MCF 10A (cell line): ENCODE measurements at regions of chr7 and their contacts with region 1.

Region 1: GRCh38 chr7:112495810-112496462 is 15.1 kb downstream of the LSMEM1 start:
- DNase-seq: peak; percentile 77
- H3K4me3 Mint-ChIP-seq: no peak overlapping the region
- H3K27ac Mint-ChIP-seq: no peak overlapping the region
- H3K4me1 Mint-ChIP-seq: peaks cover 8% of the 10 kb centered on the region
- H3K27me3 Mint-ChIP-seq: peaks cover 24% of the 10 kb centered on the region
- CTCF ChIP-seq: peak; percentile 47

Region 2: GRCh38 chr7:111741811-111742240 is 754.1 kb before region 1 on chr7:
- CTCF ChIA-PET with region 1: interaction called, 59 read pairs
- POLR2A ChIA-PET with region 1: interaction called, 3 read pairs
- intact Hi-C with region 1: loop called (anchors 5 kb)
- DNase-seq: peak; percentile 78
- H3K4me3 Mint-ChIP-seq: no peak overlapping the region
- H3K27ac Mint-ChIP-seq: no peak overlapping the region
- H3K4me1 Mint-ChIP-seq: no peaks in the 10 kb centered on the region
- H3K27me3 Mint-ChIP-seq: no peaks in the 10 kb centered on the region
- CTCF ChIP-seq: peak; percentile 64

Region 3: GRCh38 chr7:111763221-111763801 is 732.6 kb before region 1 on chr7:
- CTCF ChIA-PET with region 1: interaction called, 17 read pairs
- POLR2A ChIA-PET with region 1: no interaction called
- intact Hi-C with region 1: loop called (anchors 1 kb)
- DNase-seq: peak; percentile 63
- H3K4me3 Mint-ChIP-seq: no peak overlapping the region
- H3K27ac Mint-ChIP-seq: no peak overlapping the region
- H3K4me1 Mint-ChIP-seq: no peaks in the 10 kb centered on the region
- H3K27me3 Mint-ChIP-seq: no peaks in the 10 kb centered on the region
- CTCF ChIP-seq: peak; percentile 50

Region 4: DNA sequence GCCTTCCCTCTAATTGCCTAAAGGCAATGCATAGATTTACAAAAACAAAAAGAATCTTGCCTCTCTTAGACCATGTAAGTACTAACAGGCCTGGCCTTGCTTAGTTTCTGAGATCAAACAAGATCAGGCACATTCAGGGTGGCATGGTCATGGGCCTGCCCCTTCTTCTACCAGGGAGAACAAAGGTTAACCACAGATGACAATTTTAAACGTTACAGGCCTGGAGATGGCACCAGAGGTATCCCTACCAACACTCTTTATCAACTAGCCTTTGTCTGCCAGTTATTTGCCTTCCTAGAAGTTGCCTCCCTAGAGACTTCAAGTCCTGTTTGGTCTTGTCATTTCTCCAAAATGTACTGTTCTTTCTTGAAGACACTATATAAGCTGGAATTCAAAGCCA is 542.3 kb before region 1 on chr7:
- CTCF ChIA-PET with region 1: interaction called, 5 read pairs
- POLR2A ChIA-PET with region 1: no interaction called
- intact Hi-C with region 1: loop called (anchors 10 kb)
- DNase-seq: peak; percentile 51
- H3K4me3 Mint-ChIP-seq: no peak overlapping the region
- H3K27ac Mint-ChIP-seq: peak overlapping the region; percentile 67
- H3K4me1 Mint-ChIP-seq: peaks cover 18% of the 10 kb centered on the region
- H3K27me3 Mint-ChIP-seq: no peaks in the 10 kb centered on the region
- CTCF ChIP-seq: peak; percentile 24

Region 5: DNA sequence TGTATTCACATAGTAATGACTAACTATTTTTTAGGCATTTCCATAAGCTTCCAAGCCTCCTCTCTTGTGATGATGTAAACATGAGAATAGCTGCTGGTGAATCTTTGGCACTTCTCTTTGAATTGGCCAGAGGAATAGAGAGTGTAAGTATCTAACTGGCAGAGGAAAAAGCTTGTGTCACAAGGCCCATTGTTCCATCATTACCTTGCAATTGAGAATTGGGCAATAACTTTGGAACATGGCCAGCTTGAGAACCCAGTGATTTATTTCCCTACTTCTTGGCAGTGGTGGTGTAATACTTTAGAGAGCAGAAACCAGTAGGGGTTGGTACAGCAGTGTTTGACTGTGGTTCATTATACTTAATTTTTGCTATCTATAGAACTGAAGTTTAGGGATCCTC is 33.7 kb before region 1 on chr7:
- CTCF ChIA-PET with region 1: interaction called, 19 read pairs
- POLR2A ChIA-PET with region 1: no interaction called
- intact Hi-C with region 1: no loop called
- DNase-seq: peak; percentile 98
- H3K4me3 Mint-ChIP-seq: no peak overlapping the region
- H3K27ac Mint-ChIP-seq: peak overlapping the region; percentile 54
- H3K4me1 Mint-ChIP-seq: peaks cover 25% of the 10 kb centered on the region
- H3K27me3 Mint-ChIP-seq: no peaks in the 10 kb centered on the region
- CTCF ChIP-seq: no peak

Region 6: GRCh38 chr7:112481833-112482670 is 13.9 kb before region 1 on chr7:
- CTCF ChIA-PET with region 1: interaction called, 19 read pairs
- POLR2A ChIA-PET with region 1: interaction called, 3 read pairs
- intact Hi-C with region 1: no loop called
- DNase-seq: peak; percentile 93
- H3K4me3 Mint-ChIP-seq: no peak overlapping the region
- H3K27ac Mint-ChIP-seq: no peak overlapping the region
- H3K4me1 Mint-ChIP-seq: peaks cover 19% of the 10 kb centered on the region
- H3K27me3 Mint-ChIP-seq: no peaks in the 10 kb centered on the region
- CTCF ChIP-seq: no peak

Region 7: DNA sequence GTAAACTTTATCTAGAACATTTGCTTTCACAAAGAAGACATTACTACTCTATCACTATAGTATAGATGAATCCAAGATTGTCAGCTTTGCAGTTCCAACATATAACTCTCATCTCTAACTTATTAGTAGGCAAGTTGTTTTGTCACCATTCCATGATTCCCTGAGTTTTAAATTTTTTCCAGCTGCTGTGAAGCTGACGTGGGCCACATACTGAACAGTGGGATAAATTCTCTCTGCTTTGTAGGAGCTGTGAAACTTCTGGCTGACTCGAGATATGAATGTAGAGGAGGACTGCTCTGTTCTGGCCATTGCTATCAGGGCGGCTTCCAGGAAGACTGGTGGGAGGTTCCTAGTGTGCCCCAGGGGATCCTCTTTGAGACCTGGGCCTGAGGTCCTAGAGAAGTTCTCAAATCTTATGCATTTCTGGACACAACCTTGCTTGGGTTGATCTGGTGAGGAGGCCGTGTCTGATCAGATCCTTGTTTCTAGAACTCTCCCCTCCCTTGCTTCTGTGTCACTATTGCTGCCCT is 42.9 kb after region 1 on chr7:
- CTCF ChIA-PET with region 1: no interaction called
- POLR2A ChIA-PET with region 1: no interaction called
- intact Hi-C with region 1: no loop called
- DNase-seq: no peak
- H3K4me3 Mint-ChIP-seq: no peak overlapping the region
- H3K27ac Mint-ChIP-seq: no peak overlapping the region
- H3K4me1 Mint-ChIP-seq: no peaks in the 10 kb centered on the region
- H3K27me3 Mint-ChIP-seq: no peaks in the 10 kb centered on the region
- CTCF ChIP-seq: no peak

Region 8: DNA sequence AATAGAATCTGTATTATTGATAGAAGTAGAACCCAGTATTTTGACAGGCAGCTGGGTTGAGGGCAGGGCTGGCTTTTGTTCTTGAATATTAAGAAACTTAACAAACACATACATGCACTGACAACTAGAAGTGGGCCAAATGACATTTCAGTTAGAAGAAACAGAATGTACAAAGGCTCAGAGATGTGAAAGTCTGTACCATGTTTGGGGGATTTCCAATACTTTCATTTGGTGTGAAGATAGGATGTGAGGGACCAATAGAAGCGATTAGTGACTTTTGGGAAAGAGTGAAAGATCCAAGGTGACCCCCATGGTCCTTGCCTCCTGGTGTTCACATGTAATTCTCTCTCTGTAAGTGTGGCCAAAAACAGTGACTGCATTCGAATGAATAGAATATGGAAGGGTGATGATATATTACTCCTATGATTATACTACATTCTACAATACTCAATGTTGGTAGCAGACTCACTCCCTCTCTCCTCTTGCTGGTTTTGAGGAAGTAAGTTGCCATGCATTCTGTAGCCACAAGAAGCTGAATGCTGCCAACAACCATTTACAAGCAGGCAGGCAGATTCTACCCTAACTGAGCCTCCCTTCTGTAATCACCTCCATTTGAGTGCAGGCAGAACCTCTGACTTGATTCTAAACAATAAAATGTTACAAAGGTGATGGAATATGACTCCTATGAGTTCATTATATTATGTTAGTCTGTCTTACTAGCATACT is 142.9 kb after region 1 on chr7:
- CTCF ChIA-PET with region 1: no interaction called
- POLR2A ChIA-PET with region 1: no interaction called
- intact Hi-C with region 1: no loop called
- DNase-seq: no peak
- H3K4me3 Mint-ChIP-seq: no peak overlapping the region
- H3K27ac Mint-ChIP-seq: no peak overlapping the region
- H3K4me1 Mint-ChIP-seq: no peaks in the 10 kb centered on the region
- H3K27me3 Mint-ChIP-seq: no peaks in the 10 kb centered on the region
- CTCF ChIP-seq: no peak

Region 9: DNA sequence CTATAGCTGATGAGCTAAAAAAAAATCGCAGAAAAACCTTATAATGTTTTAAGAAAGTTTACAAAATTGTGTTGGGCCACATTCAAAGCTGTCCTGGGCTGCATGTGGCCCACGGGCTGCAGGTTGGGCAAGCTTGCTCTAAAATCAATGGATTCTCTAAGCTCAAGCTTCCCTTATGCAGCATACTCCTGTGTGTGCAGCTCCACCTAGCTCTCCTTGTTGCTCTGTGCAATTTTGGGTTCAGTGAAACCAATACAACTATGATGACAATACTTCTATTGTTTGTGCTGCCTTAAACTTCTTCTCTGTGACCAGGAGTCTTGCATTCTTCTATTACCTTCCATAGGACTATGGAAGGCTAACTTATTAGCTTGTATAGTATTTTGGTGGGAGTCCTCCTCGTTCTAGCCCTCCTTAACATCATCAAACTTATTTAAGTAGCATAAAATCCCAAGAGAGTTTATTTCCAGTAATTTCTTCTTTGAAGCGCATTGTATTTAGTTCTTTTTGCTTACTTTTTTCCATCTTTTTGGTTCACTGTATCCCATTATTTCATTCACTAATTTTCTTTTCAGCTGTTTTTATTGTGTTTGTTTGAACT is 793.3 kb after region 1 on chr7:
- CTCF ChIA-PET with region 1: no interaction called
- POLR2A ChIA-PET with region 1: no interaction called
- intact Hi-C with region 1: loop called (anchors 1 kb)
- DNase-seq: peak; percentile 64
- H3K4me3 Mint-ChIP-seq: no peak overlapping the region
- H3K27ac Mint-ChIP-seq: no peak overlapping the region
- H3K4me1 Mint-ChIP-seq: peaks cover 5% of the 10 kb centered on the region
- H3K27me3 Mint-ChIP-seq: no peaks in the 10 kb centered on the region
- CTCF ChIP-seq: peak; percentile 68